Endothelial cell of umbilical vein (primary cell): ENCODE measurements at regions of chr12 and their contacts with region 1.

Region 1: DNA sequence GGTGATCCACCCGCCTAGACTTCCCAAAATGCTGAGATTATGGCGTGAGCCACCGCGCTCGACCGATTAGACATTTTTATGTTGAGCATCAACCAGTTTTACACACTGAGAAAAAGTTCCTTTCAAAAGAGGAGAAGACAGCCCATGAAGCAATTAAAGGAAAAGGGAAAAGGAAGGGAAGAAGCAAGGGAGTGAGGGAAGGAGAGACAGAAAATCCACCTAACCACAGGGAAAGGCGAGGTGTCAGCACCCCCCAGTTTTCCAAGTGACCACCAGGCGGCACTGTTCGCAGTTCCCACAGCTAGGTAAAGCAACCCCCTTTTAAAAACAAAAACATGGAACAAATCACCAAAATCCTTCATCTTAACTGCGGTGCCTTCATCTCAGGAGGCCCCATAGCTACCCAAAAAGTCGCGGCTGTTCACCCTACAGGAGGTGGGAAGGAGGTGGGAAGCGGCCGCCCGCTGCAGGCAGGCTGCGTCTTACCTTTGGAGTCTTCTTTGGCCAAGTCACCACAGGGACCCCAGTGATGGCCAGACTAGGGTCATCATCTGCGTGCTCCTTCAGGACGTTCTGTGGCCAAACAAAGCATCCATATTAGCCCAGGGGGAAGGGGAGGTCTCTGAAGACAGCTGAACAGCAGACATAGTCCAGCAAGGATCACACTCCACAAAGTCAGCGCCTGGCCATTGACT is 86.6 kb downstream of the KDM2B start:
- DNase-seq: peak; percentile 31
- H3K4me3 ChIP-seq: no peak overlapping the region
- H3K27ac ChIP-seq: no peak overlapping the region
- H3K4me1 ChIP-seq: no peaks in the 10 kb centered on the region
- H3K27me3 ChIP-seq: no peaks in the 10 kb centered on the region
- CTCF ChIP-seq: peak; percentile 82 to 94
- POLR2A ChIP-seq: no peak

Region 2: DNA sequence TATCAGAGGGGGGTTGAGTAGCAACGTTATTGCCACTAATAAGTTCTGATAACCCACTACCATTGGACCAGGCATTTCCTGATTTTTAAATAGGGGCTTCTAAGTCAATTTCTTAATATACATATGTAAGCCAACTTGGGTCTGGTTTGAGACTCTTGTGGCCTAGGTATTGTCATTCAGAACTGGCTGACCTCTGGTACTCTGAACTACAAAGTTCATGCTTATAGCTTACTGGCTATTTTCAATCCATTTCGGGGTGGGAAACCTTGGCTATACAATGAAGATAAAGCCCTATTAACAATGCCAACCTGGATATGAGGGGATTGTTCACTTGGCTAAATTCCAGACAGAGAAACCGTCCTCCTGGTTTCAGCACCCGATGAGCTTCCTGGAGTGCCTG is 989.7 kb before region 1 on chr12:
- CTCF ChIA-PET with region 1: no interaction called
- POLR2A ChIA-PET with region 1: no interaction called
- dilution Hi-C with region 1: no loop called
- intact Hi-C with region 1: no loop called
- DNase-seq: no peak
- H3K4me3 ChIP-seq: no peak overlapping the region
- H3K27ac ChIP-seq: no peak overlapping the region
- H3K4me1 ChIP-seq: no peaks in the 10 kb centered on the region
- H3K27me3 ChIP-seq: no peaks in the 10 kb centered on the region
- CTCF ChIP-seq: no peak
- POLR2A ChIP-seq: no peak

Region 3: GRCh38 chr12:121467115-121467793 is 27.0 kb before region 1 on chr12:
- CTCF ChIA-PET with region 1: no interaction called
- POLR2A ChIA-PET with region 1: no interaction called
- dilution Hi-C with region 1: no loop called
- intact Hi-C with region 1: no loop called
- DNase-seq: peak; percentile 87
- H3K4me3 ChIP-seq: peak overlapping the region; percentile 6 to 65 (median 46)
- H3K27ac ChIP-seq: peak overlapping the region; percentile 53
- H3K4me1 ChIP-seq: peaks cover 10% of the 10 kb centered on the region
- H3K27me3 ChIP-seq: no peaks in the 10 kb centered on the region
- CTCF ChIP-seq: no peak
- POLR2A ChIP-seq: peak; percentile 42

Region 4: DNA sequence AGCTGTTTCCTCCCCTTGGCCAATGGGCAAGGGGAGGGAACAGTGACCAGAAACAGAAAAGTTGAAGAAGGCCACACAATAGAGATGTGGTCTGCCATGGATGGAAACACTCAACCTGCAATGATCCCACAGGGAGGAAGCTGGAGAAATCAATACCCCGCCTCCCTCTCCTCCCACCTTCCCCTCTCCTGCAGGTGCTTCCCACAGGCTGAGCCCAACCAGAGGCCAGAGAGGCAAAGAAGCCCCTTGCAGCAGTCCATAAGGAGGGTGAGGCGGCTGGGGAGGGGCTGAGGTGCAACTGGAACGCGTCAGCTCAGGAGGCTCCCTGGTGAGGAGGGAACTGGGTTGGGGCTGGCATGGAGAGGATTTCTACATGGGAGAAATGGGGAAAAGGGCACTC is 10.3 kb before region 1 on chr12:
- CTCF ChIA-PET with region 1: interaction called, 19 read pairs
- POLR2A ChIA-PET with region 1: no interaction called
- dilution Hi-C with region 1: no loop called
- intact Hi-C with region 1: no loop called
- DNase-seq: no peak
- H3K4me3 ChIP-seq: no peak overlapping the region
- H3K27ac ChIP-seq: no peak overlapping the region
- H3K4me1 ChIP-seq: no peaks in the 10 kb centered on the region
- H3K27me3 ChIP-seq: no peaks in the 10 kb centered on the region
- CTCF ChIP-seq: no peak
- POLR2A ChIP-seq: no peak

Region 5: DNA sequence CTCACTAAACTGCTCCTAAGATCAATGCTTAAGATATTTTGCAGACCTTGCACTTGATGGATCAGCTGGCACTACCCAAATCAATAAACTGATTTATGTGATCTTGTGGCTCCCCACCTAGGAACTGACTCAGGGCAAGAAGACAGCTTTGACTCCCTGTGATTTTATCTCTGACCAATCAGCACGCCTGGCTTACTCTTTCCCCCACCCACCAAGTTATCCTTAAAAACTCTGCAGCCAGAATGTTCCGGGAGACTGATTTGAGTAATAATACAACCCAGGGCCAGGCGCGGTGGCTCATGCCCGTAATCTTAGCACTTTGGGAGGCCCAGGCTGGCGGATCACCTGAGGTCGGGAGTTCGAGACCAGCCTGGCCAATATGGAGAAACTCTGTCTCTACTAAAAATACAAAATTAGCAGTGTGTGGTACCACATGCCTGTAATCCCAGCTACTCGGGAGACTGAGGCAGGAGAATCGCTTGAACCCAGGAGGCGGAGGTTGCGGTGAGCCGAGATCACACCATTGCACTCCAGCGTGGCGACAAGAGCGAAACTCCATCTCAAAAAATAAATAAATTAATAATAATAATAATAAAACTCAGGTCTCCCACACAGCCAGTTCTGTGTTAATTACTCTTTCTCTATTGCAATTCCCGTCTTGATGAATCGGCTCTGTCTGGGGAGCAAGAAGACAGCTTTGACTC is 163.2 kb after region 1 on chr12:
- CTCF ChIA-PET with region 1: no interaction called
- POLR2A ChIA-PET with region 1: no interaction called
- dilution Hi-C with region 1: no loop called
- intact Hi-C with region 1: no loop called
- DNase-seq: no peak
- H3K4me3 ChIP-seq: no peak overlapping the region
- H3K27ac ChIP-seq: no peak overlapping the region
- H3K4me1 ChIP-seq: peaks cover 12% of the 10 kb centered on the region
- H3K27me3 ChIP-seq: no peaks in the 10 kb centered on the region
- CTCF ChIP-seq: no peak
- POLR2A ChIP-seq: no peak

Region 6: DNA sequence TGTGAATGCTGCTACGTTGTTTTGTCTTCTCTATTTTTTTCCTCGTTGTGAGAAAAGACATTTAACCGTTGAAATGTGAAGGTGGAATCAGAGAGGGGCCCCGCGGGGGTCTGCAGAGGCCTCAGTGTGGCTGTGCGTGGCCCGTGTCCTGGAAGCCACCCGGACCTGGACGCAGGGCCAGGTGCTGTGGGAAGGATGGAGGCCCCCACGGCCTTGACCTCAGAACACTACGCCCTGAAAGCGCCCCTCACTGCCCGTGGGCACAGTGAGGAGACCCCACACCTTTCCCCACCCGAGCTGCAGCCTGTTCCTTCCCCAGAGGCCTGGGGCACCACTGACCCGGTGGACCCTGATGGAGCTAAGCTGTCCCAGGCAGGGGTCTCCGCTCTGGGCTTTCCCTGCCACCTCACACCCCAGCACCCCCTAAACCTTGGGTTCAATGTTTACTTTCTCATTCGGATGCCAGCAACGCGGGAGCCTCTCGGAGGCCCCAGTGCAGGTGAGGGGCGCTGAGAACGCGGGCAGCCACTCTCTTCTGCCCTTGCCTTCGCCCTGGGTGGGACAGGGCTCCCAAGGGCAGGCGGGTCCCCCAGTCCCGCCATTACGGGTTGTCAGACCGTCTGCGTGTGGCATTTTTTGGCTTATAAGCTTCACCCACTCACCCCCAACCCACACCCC is 336.5 kb after region 1 on chr12:
- CTCF ChIA-PET with region 1: no interaction called
- POLR2A ChIA-PET with region 1: interaction called, 10 read pairs
- dilution Hi-C with region 1: no loop called
- intact Hi-C with region 1: no loop called
- DNase-seq: no peak
- H3K4me3 ChIP-seq: no peak overlapping the region
- H3K27ac ChIP-seq: no peak overlapping the region
- H3K4me1 ChIP-seq: no peaks in the 10 kb centered on the region
- H3K27me3 ChIP-seq: no peaks in the 10 kb centered on the region
- CTCF ChIP-seq: no peak
- POLR2A ChIP-seq: no peak